K562 (cell line): ENCODE measurements at regions of chr2 and their contacts with region 1.

Region 1: DNA sequence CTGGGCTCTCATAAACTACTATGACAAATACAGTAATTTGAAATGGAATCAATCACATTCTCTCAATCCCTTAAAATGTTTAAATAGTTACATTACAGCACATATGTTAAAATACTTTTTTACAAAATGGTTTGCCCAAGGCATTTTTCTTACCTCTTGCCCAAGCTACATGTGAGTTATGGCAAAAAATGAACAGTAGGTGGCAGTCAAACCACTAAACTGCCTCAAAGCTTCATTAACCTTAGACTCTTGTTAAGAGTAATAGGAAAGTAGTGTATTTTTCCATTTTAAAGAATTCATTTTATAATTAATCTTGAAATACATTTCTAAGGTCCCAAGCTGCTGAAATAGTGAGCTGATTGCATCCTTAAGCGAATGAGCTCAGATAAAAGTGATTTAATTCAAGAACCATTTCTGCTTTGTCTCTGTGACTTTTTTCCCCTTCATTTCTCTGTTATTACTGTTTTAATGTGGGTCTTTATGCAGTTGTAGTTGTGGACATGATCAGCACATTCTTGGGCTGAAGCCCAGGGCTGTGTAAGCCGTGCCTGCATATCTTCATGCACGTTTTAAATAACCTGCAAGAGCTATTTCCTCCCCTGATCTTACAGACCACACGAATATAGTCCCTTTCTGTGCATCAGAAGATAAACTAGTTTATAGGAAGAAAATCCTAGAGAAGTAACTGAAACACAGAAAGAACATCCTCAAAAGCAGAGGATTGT is 311.8 kb downstream of the LNPK start:
- DNase-seq: peak; percentile 37 to 78 (median 63)
- ATAC-seq: peak; percentile 93
- H3K4me3 ChIP-seq: no peak overlapping the region
- H3K27ac ChIP-seq: no peak overlapping the region
- H3K4me1 ChIP-seq: no peaks in the 10 kb centered on the region
- H3K27me3 ChIP-seq: peaks cover 0 to 6% of the 10 kb centered on the region in 2 experiments; a peak in 4 of 5 replicates
- CTCF ChIP-seq: peak; percentile 66 to 92 (median 74)
- EP300 ChIP-seq: no peak
- POLR2A ChIP-seq: no peak
- RAD21 ChIP-seq: peak; percentile 97

Region 2: DNA sequence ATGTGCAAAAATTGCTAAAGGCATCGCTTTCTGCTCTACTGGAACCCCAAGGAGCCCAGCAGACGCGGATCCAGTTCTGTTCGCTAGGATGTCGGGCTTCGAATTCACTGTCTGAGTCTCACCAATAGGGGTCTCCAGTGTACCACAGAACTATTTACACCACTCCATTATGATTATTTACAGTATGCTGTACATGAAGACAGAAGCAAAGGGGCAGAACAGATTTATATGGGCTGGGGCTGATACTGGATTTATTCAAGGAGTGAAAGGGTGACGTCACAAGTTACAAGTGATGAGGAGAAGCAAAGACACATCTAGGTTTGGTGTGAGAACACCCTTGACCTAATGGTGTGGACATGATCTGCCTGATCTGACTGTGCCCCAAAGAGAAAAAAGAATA is 323.5 kb before region 1 on chr2:
- CTCF ChIA-PET with region 1: interaction called, 5 read pairs
- POLR2A ChIA-PET with region 1: no interaction called
- in situ Hi-C with region 1: no loop called
- intact Hi-C with region 1: loop called (anchors 5 kb)
- DNase-seq: peak; percentile 53 to 67 (median 62)
- ATAC-seq: peak; percentile 98
- H3K4me3 ChIP-seq: no peak overlapping the region
- H3K27ac ChIP-seq: no peak overlapping the region
- H3K4me1 ChIP-seq: no peaks in the 10 kb centered on the region
- H3K27me3 ChIP-seq: 0 out of 5 replicates have a peak, but pooled peaks cover 0 to 4% of the 10 kb centered on the region in 2 experiments
- CTCF ChIP-seq: peak; percentile 86 to 88 (median 88)
- EP300 ChIP-seq: no peak
- POLR2A ChIP-seq: no peak
- RAD21 ChIP-seq: peak; percentile 83 to 84

Region 3: DNA sequence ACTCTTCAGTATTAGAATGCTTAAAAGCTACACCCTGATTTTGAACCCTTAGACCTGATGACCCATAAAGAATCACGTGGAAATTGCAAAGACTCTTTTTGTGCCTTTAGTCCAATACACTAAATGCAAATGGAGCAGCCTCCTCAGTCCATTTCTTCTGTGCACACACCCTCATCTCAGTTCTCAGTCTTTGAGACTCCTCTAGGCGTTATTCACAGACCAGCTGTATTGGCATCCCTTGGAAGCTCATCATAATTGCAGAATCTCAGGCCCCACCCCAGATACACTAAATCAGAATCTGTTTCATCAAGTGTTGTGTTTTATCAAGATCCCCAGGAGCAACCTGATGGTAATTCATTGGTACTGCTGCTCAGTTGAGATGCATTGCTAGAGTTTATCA is 173.7 kb before region 1 on chr2:
- CTCF ChIA-PET with region 1: no interaction called
- POLR2A ChIA-PET with region 1: no interaction called
- in situ Hi-C with region 1: no loop called
- intact Hi-C with region 1: no loop called
- DNase-seq: no peak
- ATAC-seq: no peak
- H3K4me3 ChIP-seq: no peak overlapping the region
- H3K27ac ChIP-seq: no peak overlapping the region
- H3K4me1 ChIP-seq: no peaks in the 10 kb centered on the region
- H3K27me3 ChIP-seq: no peaks in the 10 kb centered on the region
- CTCF ChIP-seq: no peak
- EP300 ChIP-seq: no peak
- POLR2A ChIP-seq: no peak
- RAD21 ChIP-seq: no peak

Region 4: DNA sequence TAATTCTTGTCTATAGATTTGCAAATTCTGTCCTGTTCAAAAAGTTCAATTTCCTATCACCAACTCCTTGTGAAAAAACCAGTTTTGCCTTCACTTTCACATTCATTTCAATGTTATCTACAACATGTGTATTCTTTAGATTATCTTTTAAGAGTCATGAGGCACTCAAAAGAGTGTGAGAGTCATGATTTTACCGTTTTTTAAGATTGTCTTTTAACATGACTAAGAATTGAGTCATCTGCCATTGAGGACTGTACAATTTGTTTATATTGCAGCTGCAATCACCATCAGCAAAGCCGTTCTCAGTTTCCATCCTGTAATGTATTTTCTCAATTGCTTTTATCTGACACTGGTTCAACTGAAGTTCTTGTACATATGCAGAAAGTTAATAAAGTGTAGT is 35.9 kb after region 1 on chr2:
- CTCF ChIA-PET with region 1: no interaction called
- POLR2A ChIA-PET with region 1: no interaction called
- in situ Hi-C with region 1: no loop called
- intact Hi-C with region 1: loop called (anchors 5 kb)
- DNase-seq: no peak
- ATAC-seq: no peak
- H3K4me3 ChIP-seq: no peak overlapping the region
- H3K27ac ChIP-seq: no peak overlapping the region
- H3K4me1 ChIP-seq: no peaks in the 10 kb centered on the region
- H3K27me3 ChIP-seq: no peaks in the 10 kb centered on the region
- CTCF ChIP-seq: no peak
- EP300 ChIP-seq: peak; percentile 52; the same call in 1 of the 2 replicates
- POLR2A ChIP-seq: no peak
- RAD21 ChIP-seq: peak in 1 of 2 experiments; percentile 6; a peak in 1 of 4 replicates

Region 5: DNA sequence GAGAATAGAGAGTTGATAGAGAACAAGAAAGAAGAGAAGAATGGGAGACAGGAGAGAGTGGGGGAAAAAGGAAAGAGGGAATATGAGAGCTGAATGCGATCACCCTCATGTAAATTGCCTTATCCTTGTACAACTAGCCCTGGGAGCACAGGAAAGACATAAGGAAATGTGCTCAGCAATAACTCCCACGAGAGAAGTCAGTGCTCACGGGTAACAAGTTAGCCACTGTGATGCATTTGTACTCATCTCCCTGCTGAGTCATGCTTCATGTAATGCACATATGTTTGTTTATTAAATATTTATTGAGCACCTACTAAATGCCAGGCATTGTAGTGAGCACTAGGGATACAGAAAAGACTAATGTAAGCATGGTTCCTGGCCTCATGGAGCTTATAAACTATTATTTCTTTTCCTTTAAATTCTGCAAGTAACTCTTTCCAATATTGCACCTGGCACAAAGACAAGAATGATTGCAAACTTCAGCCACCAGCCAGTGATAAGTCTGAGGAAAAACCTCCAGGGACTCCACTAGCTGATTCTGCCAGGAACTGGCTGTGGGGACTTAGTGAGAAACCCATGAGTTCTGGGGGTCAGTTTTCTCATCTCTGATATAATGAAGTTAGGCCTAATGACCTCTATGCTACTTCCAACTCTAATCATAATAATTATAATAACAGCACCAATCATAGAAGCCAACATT is 187.7 kb after region 1 on chr2:
- CTCF ChIA-PET with region 1: no interaction called
- POLR2A ChIA-PET with region 1: no interaction called
- in situ Hi-C with region 1: no loop called
- intact Hi-C with region 1: loop called (anchors 10 kb)
- DNase-seq: no peak
- ATAC-seq: no peak
- H3K4me3 ChIP-seq: no peak overlapping the region
- H3K27ac ChIP-seq: no peak overlapping the region
- H3K4me1 ChIP-seq: no peaks in the 10 kb centered on the region
- H3K27me3 ChIP-seq: peaks cover 2 to 9% of the 10 kb centered on the region in 2 experiments; a peak in 3 of 5 replicates
- CTCF ChIP-seq: no peak
- EP300 ChIP-seq: no peak
- POLR2A ChIP-seq: no peak
- RAD21 ChIP-seq: no peak

Region 6: DNA sequence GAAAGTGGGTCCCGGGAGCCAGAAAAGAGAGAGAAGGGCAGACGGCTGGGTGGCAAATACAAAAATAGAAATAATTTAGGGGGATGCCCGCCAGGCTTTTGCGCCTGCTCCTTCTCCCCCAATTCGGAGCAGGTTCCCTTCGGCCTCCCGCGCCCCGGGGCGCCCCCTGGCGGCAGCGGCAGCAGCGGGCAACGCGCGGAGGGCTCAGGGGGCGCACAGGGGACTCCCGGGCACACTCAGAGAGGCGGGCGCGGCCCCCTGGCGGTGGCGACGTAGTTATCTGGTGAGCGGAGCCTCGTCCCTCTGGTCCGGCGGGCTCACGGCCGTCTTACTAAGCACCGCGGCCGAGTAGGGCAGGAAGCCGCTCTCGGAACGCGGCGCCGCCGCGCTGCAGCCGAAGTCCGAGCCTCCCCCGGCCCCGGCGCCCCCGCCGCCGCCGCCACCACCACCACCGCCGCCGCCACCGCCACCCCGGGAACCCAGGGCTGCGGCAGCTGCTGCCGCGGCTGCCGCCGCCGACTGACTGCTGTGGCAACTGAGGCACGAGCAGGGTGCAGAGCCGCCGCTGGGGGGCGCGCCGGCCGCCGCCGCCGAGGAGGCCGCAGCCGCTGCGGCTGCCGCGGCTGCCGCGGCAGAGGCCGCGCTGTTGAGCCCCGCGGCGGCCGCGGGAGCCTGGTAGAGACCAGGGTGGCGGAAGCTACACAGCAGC is 389.7 kb after region 1 on chr2:
- CTCF ChIA-PET with region 1: interaction called, 36 read pairs
- POLR2A ChIA-PET with region 1: no interaction called
- in situ Hi-C with region 1: loop called (anchors 10 kb)
- intact Hi-C with region 1: loop called (anchors 2 kb)
- DNase-seq: peak; percentile 84 to 95 (median 94)
- ATAC-seq: peak; percentile 97
- H3K4me3 ChIP-seq: peak overlapping the region; percentile 52
- H3K27ac ChIP-seq: no peak overlapping the region
- H3K4me1 ChIP-seq: peaks cover 3 to 29% of the 10 kb centered on the region in 2 experiments; a peak in 3 of 5 replicates
- H3K27me3 ChIP-seq: peaks cover 49 to 68% of the 10 kb centered on the region in 2 experiments
- CTCF ChIP-seq: peak; percentile 97 to 99 (median 98)
- EP300 ChIP-seq: no peak
- POLR2A ChIP-seq: no peak
- RAD21 ChIP-seq: peak; percentile 89 to 94

Region 7: DNA sequence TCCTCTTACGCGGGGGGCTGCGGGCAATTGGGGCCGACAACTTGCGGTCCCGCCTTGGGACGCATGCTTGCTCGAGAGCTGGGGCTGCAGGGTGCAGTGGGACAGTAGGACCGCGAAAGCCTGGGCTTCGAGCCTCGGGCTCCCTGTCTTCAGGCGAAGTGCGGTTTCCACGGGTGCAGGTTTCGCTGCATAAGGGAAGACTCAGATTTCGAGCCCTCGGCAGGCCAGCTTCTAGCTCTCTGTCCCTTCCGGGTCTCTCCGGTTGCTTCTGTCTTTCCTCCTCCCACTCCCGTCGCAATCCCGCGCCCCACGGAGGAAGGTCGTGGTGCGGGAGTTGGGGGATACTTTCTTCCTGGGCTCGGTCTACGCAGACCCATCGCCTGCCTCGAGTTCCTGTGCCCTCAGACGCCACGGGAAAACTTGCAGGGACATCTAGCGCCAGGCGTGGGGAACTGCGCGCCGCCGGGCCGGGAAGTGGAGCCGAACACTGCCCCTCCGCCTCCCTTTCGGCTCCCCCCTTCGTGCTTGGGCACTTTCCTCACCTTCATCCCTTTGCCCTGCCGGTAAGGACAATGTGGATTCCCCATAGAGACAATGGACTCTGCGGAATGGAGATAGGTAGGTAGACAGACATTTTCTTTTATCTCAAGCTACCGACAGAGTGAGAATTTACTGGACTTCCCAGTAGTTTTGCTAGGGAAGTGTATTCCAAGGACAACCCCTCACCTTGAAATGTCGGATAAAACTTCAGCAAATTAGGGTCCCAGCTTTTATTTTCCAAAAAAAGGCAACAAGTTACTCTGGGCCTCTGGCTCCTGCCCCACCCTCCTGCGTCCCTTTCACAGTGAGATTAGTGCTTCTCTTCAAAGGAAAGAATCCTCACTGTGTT is 398.0 kb after region 1 on chr2:
- CTCF ChIA-PET with region 1: interaction called, 14 read pairs
- POLR2A ChIA-PET with region 1: no interaction called
- in situ Hi-C with region 1: no loop called
- intact Hi-C with region 1: loop called (anchors 1 kb)
- DNase-seq: peak; percentile 39 to 71 (median 56)
- ATAC-seq: peak; percentile 93
- H3K4me3 ChIP-seq: no peak overlapping the region
- H3K27ac ChIP-seq: no peak overlapping the region
- H3K4me1 ChIP-seq: peaks cover 0 to 29% of the 10 kb centered on the region in 2 experiments; a peak in 2 of 5 replicates
- H3K27me3 ChIP-seq: peaks cover 70 to 86% of the 10 kb centered on the region in 2 experiments
- CTCF ChIP-seq: peak; percentile 81 to 82 (median 81)
- EP300 ChIP-seq: no peak
- POLR2A ChIP-seq: no peak
- RAD21 ChIP-seq: peak; percentile 79 to 82